Left ventricle myocardium inferior (tissue), 1 donor: ENCODE measurements at regions of chr3 and their contacts with region 1.

Region 1: DNA sequence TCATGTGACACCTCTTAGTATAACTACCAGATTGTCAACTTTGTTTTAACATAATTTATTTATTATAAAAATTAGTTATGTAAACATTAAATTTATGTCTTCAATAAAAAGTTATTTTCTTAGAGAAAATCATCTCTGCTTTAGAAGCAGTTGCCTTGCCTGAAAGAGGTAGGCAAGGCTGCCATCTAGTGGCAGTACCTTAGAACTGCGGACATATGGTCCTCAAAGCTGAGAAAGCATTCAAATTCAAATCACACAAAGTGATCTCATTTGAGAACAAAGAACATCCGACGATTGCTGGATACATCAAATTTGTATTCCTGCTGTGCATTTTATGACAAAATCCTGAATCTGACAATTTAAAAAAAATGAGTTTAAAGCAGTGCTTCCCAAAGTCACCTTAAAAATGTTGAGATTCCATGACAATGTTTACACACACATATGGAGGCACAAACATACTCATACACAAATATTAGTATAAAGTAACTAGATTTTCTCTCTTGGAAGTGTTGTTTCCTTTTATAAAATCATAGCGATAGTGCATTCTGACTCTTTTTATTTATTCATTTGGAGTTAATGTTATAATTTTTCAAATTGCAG is 617.4 kb downstream of the CADM2 start:
- DNase-seq: no peak
- H3K4me3 ChIP-seq: no peak overlapping the region
- H3K27ac ChIP-seq: no peak overlapping the region
- H3K4me1 ChIP-seq: no peaks in the 10 kb centered on the region
- H3K27me3 ChIP-seq: no peaks in the 10 kb centered on the region
- CTCF ChIP-seq: peak; percentile 93

Region 2: DNA sequence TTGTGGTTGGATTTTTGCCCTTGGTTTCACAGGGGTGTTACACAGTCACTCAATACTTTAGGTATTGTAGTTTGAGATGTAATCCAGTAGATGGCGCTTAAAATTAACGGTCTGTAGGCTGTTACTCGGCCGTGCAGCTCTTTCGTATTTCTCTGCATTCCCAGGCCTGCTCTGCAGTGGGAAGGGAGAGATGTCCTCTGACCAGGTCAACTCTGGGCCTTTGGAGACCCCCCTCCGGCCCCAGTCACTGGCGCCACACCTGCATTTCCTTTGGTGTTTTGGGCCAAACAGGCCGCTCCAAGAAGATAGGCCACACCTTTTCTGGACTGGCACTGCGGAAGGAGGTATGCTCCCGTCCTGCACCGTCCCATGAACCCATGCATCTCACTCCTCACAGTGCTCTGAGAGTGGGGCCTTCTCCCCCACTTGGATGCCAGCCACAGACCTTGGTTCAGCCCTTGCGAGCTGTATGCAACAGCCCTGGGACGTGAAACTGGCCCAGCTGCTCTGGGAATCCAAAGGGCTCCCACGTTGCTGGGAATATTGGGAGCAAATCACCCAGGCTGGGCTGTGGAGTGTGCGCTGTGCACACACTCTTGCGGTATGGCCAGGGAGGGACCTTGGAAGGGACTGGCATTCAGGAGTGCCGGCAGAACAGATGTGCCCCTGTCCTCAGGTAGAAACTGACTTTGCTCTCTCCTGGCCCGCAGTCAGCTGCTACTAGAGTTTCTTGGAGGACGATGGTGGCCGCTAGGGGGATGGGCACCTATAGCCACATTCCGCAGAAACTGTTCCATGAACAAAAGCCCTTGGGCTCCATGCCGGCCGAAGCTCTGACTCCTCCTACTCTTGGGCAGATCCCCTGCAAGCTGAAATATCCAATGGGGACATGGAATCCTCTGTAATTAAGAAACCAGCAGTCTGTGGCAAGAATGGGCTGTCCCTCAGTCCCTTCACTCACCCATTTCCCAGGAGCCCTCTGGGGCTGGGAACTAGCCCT is 1027.9 kb before region 1 on chr3:
- intact Hi-C with region 1: loop called (anchors 10 kb)
- DNase-seq: no peak
- H3K4me3 ChIP-seq: peak overlapping the region; percentile 44
- H3K27ac ChIP-seq: no peak overlapping the region
- H3K4me1 ChIP-seq: peaks cover 3% of the 10 kb centered on the region
- H3K27me3 ChIP-seq: no peaks in the 10 kb centered on the region
- CTCF ChIP-seq: peak; percentile 61